ENCODE measurements at regions of chr6 and their contacts with region 1.

Region 1: DNA sequence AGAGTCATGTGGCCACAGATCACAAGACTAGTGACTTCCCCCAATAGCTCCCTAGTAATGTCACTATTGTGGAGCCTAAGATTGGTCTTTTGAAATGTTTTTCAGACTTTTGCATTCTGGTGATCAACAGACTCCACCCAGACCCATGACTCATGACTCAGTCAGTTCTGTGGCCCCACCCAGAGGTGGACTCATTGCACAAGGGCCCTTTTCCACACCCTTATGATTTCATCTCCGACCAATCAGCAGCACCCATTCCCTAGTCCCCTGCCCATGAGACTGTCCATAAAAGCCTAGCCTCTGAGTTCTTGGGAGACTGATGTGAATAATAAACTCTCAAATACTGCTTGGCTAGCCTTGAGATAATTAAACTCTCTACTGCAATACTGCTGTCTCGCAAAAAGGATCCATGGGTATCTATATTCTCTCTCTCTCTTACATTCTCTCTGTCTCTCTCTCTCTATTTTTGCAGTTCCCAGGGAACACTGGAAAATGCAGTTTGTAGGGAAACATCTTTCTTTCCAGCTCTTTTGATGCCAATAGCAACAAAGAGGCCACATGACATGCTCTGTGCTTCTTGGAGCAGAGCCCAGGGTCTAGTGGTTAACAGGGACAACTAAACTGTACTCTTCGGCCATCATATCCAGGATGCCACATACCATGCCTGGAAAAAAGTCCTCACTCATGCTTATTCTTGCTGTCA is 71.3 kb upstream of the IYD start:
- DNase-seq: peak; percentile 56 to 72 (median 66)
- ATAC-seq: peak; percentile 88
- H3K4me3 ChIP-seq: no peak overlapping the region
- H3K27ac ChIP-seq: peak overlapping the region; percentile 64; the same call in 2 of the 3 replicates
- H3K4me1 ChIP-seq: peaks cover 3 to 23% of the 10 kb centered on the region in 2 experiments; a peak in 4 of 5 replicates
- H3K27me3 ChIP-seq: no peaks in the 10 kb centered on the region
- CTCF ChIP-seq: no peak
- EP300 ChIP-seq: peak; percentile 16; the same call in 1 of the 2 replicates
- POLR2A ChIP-seq: no peak
- RAD21 ChIP-seq: no peak

Region 2: DNA sequence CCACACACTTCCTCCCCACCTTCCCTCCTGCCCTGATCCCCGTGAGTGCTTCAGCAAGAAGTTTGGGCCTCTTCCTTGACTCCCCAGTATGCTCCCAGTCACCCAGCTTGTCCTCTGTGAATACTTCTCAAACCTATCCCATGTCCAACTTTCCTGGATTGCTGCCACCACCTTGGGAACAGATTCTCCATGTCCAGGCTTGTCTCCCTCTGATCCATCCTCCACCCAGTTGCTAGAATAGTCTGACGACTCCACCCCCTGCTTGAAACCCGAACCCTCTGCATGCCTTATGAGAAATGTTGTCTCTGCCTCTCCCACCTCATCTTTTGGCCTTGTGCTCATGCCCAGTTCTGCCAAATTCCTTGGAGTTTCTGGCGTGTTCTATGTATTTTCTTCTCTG is 46.7 kb before region 1 on chr6:
- CTCF ChIA-PET with region 1: no interaction called
- POLR2A ChIA-PET with region 1: no interaction called
- in situ Hi-C with region 1: no loop called
- intact Hi-C with region 1: no loop called
- DNase-seq: peak; percentile 29 to 55 (median 44)
- ATAC-seq: peak; percentile 76
- H3K4me3 ChIP-seq: no peak overlapping the region
- H3K27ac ChIP-seq: no peak overlapping the region
- H3K4me1 ChIP-seq: peaks cover 19 to 42% of the 10 kb centered on the region in 2 experiments
- H3K27me3 ChIP-seq: no peaks in the 10 kb centered on the region
- CTCF ChIP-seq: no peak; a peak in 1 of 6 replicates
- EP300 ChIP-seq: no peak
- POLR2A ChIP-seq: no peak
- RAD21 ChIP-seq: no peak

Region 3: DNA sequence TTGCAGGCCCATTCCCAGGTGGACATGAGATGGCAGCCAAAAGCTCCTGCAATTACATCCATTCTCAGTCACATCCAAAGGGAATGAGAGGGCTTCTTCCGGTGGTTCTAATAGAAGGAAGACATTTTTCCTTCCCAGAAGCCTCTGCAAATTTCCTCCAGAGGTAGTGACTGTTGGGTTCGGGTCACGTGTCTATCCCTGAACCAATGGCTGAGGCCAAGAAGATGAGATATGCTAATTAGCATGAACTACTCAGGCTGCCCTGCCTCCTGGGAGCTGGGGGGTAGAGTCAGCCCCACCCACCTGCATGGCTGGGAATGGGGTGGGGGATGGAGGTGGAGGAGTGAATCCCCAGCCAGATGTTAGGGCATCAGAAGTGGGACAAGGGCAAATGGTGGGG is 10.0 kb after region 1 on chr6:
- CTCF ChIA-PET with region 1: no interaction called
- POLR2A ChIA-PET with region 1: interaction called, 13 read pairs
- in situ Hi-C with region 1: no loop called
- intact Hi-C with region 1: no loop called
- DNase-seq: peak in 3 of 4 experiments; percentile 40 to 54 (median 41)
- ATAC-seq: peak; percentile 77
- H3K4me3 ChIP-seq: no peak overlapping the region
- H3K27ac ChIP-seq: no peak overlapping the region
- H3K4me1 ChIP-seq: peaks cover 3 to 5% of the 10 kb centered on the region in 2 experiments; a peak in 3 of 5 replicates
- H3K27me3 ChIP-seq: no peaks in the 10 kb centered on the region
- CTCF ChIP-seq: no peak
- EP300 ChIP-seq: no peak
- POLR2A ChIP-seq: no peak
- RAD21 ChIP-seq: no peak

Region 4: GRCh38 chr6:150470960-150471665 is 173.6 kb after region 1 on chr6:
- CTCF ChIA-PET with region 1: no interaction called
- POLR2A ChIA-PET with region 1: no interaction called
- in situ Hi-C with region 1: no loop called
- intact Hi-C with region 1: no loop called
- DNase-seq: no peak
- ATAC-seq: no peak
- H3K4me3 ChIP-seq: no peak overlapping the region
- H3K27ac ChIP-seq: no peak overlapping the region
- H3K4me1 ChIP-seq: no peaks in the 10 kb centered on the region
- H3K27me3 ChIP-seq: peaks cover 0 to 8% of the 10 kb centered on the region in 2 experiments; a peak in 3 of 5 replicates
- CTCF ChIP-seq: no peak
- EP300 ChIP-seq: no peak
- POLR2A ChIP-seq: no peak
- RAD21 ChIP-seq: no peak